CD8-positive, alpha-beta T cell (primary cell): ENCODE measurements at regions of chr2 and their contacts with region 1.

Region 1: GRCh38 chr2:45993476-45993991 is 303.7 kb upstream of the EPAS1 start:
- DNase-seq: peak; percentile 12 to 79 (median 58)
- ATAC-seq: peak; percentile 75
- H3K4me3 ChIP-seq: no peak overlapping the region
- H3K4me3 Mint-ChIP-seq: no peak overlapping the region
- H3K27ac ChIP-seq: no peak overlapping the region
- H3K27ac Mint-ChIP-seq: no peak overlapping the region
- H3K4me1 ChIP-seq: peaks cover 4% of the 10 kb centered on the region
- H3K4me1 Mint-ChIP-seq: peaks cover 5% of the 10 kb centered on the region
- H3K27me3 ChIP-seq: no peaks in the 10 kb centered on the region
- H3K27me3 Mint-ChIP-seq: no peaks in the 10 kb centered on the region
- CTCF ChIP-seq: peak; percentile 65

Region 2: GRCh38 chr2:46003903-46004473 is 10.5 kb after region 1 on chr2:
- CTCF ChIA-PET with region 1: interaction called, 15 read pairs
- POLR2A ChIA-PET with region 1: no interaction called
- intact Hi-C with region 1: no loop called
- DNase-seq: no peak
- ATAC-seq: no peak
- H3K4me3 ChIP-seq: no peak overlapping the region
- H3K4me3 Mint-ChIP-seq: no peak overlapping the region
- H3K27ac ChIP-seq: no peak overlapping the region
- H3K27ac Mint-ChIP-seq: no peak overlapping the region
- H3K4me1 ChIP-seq: no peaks in the 10 kb centered on the region
- H3K4me1 Mint-ChIP-seq: no peaks in the 10 kb centered on the region
- H3K27me3 ChIP-seq: no peaks in the 10 kb centered on the region
- H3K27me3 Mint-ChIP-seq: no peaks in the 10 kb centered on the region
- CTCF ChIP-seq: no peak

Region 3: GRCh38 chr2:46062637-46063412 is 69.3 kb after region 1 on chr2:
- CTCF ChIA-PET with region 1: interaction called, 13 read pairs
- POLR2A ChIA-PET with region 1: no interaction called
- intact Hi-C with region 1: no loop called
- DNase-seq: peak; percentile 51 to 74 (median 70)
- ATAC-seq: peak; percentile 76
- H3K4me3 ChIP-seq: no peak overlapping the region
- H3K4me3 Mint-ChIP-seq: no peak overlapping the region
- H3K27ac ChIP-seq: no peak overlapping the region
- H3K27ac Mint-ChIP-seq: no peak overlapping the region
- H3K4me1 ChIP-seq: no peaks in the 10 kb centered on the region
- H3K4me1 Mint-ChIP-seq: peaks cover 3% of the 10 kb centered on the region
- H3K27me3 ChIP-seq: no peaks in the 10 kb centered on the region
- H3K27me3 Mint-ChIP-seq: peaks cover 3% of the 10 kb centered on the region
- CTCF ChIP-seq: peak; percentile 79